Panc1 (cell line): ENCODE measurements at regions of chr22 and their contacts with region 1.

Region 1: GRCh38 chr22:39003165-39003638 is 10.9 kb upstream of the APOBEC3C start:
- DNase-seq: no peak
- ATAC-seq: peak; percentile 96
- H3K4me3 ChIP-seq: no peak overlapping the region
- H3K27ac ChIP-seq: no peak overlapping the region
- H3K4me1 ChIP-seq: no peaks in the 10 kb centered on the region
- H3K27me3 ChIP-seq: no peaks in the 10 kb centered on the region
- CTCF ChIP-seq: peak; percentile 81

Region 2: DNA sequence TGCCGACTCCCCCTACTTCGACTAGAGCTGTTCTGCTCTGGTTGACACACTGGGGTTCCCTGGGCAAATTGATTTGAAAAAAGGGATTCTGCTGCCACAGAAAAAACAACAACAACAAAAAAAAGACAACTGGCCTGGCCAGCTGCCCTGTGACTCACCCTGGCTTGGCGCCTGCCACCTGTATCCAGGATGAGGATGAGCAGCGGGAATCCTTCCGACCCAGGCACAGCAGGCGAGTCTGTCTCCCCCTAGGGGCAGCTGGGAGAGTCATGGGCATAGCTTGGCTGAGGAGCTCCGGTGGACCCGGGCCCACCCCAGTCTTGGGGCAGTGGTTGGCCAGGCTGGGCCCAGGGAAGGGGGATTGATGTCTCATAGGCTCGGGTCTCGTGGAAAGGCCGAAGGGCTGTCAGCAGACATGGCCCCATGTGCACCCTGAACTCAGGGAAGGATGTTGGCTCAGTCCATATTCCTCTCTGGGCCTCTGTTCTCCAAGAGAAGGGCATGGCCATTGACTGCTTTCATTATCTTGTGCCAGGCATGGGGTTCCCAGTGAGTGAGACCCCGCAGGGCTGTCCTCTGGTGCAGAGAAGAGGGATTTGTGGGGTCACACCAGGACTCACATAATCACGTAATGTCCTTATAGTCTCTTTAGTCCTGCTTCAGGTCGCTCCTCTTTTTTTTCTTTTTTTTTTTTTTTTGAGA is 237.0 kb before region 1 on chr22:
- CTCF ChIA-PET with region 1: interaction called, 11 read pairs
- POLR2A ChIA-PET with region 1: no interaction called
- in situ Hi-C with region 1: no loop called
- intact Hi-C with region 1: no loop called
- DNase-seq: no peak
- ATAC-seq: peak; percentile 71
- H3K4me3 ChIP-seq: no peak overlapping the region
- H3K27ac ChIP-seq: no peak overlapping the region
- H3K4me1 ChIP-seq: no peaks in the 10 kb centered on the region; the same call in 1 of the 2 replicates
- H3K27me3 ChIP-seq: no peaks in the 10 kb centered on the region
- CTCF ChIP-seq: peak; percentile 88

Region 3: DNA sequence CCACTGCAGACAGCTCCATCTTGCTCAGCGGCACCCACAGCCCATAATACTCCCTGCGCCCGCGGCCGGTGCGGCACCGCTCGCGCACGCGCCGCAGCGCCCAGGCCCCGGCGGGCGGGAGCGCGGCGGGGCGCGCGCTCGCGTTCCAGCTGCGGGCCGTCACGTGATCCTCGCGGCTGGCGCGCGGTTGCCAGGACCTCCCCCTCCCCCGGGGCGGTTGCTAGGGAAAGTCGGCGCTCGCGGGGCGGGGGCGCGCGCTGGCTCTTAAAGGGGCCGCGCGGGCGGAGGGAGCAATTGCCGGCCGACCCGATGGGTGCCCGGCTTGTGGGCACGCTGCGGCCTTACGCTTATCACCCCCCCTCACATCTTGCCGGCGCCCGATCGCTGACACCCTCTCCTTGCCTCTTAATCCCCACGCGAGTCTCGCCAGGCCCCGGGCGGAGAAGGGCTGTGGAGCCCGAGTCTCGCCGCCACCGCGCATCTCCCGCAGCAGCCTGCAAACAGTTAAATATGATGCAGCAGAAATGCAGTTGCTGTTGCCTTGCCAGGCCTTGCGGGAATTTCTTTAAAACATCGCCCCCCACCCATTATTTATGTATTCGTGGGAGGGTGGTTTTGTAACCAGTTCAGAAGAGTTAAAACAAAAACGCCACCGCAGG is 130.9 kb before region 1 on chr22 and contains the start of gene CBX6:
- CTCF ChIA-PET with region 1: interaction called, 11 read pairs
- POLR2A ChIA-PET with region 1: no interaction called
- in situ Hi-C with region 1: no loop called
- intact Hi-C with region 1: loop called (anchors 10 kb)
- DNase-seq: no peak
- ATAC-seq: peak; percentile 86
- H3K4me3 ChIP-seq: peak within 1 kb of the TSS; percentile 63 to 74
- H3K27ac ChIP-seq: peak within 1 kb of the TSS; percentile 83
- H3K4me1 ChIP-seq: peaks cover 23% of the 10 kb centered on the region
- H3K27me3 ChIP-seq: no peaks in the 10 kb centered on the region
- CTCF ChIP-seq: no peak
- total RNA-seq, gene CBX6: 98.4 TPM

Region 4: GRCh38 chr22:39106326-39106725 is 103.1 kb after region 1 on chr22:
- CTCF ChIA-PET with region 1: no interaction called
- POLR2A ChIA-PET with region 1: no interaction called
- in situ Hi-C with region 1: no loop called
- intact Hi-C with region 1: no loop called
- DNase-seq: no peak
- ATAC-seq: no peak
- H3K4me3 ChIP-seq: no peak overlapping the region
- H3K27ac ChIP-seq: no peak overlapping the region
- H3K4me1 ChIP-seq: no peaks in the 10 kb centered on the region
- H3K27me3 ChIP-seq: no peaks in the 10 kb centered on the region
- CTCF ChIP-seq: no peak

Region 5: GRCh38 chr22:39117585-39118191 is 114.5 kb after region 1 on chr22:
- CTCF ChIA-PET with region 1: interaction called, 5 read pairs
- POLR2A ChIA-PET with region 1: no interaction called
- in situ Hi-C with region 1: no loop called
- intact Hi-C with region 1: loop called (anchors 5 kb)
- DNase-seq: peak; percentile 24
- ATAC-seq: no peak
- H3K4me3 ChIP-seq: no peak overlapping the region
- H3K27ac ChIP-seq: no peak overlapping the region
- H3K4me1 ChIP-seq: no peaks in the 10 kb centered on the region
- H3K27me3 ChIP-seq: no peaks in the 10 kb centered on the region
- CTCF ChIP-seq: peak; percentile 63